Activated CD4-positive, alpha-beta T cell treated with anti-CD3 and anti-CD28 coated beads, Interleukin-2, amount 10 ng/mL, durations not matched to agents 24 days and 14 days (primary cell): ENCODE measurements at regions of chr20 and their contacts with region 1.

Region 1: GRCh38 chr20:50731055-50731871 is at the start of gene PARD6B:
- DNase-seq: peak; percentile 100
- H3K4me3 Mint-ChIP-seq: peak within 1 kb of the TSS; percentile 86
- H3K27ac Mint-ChIP-seq: peak within 1 kb of the TSS; percentile 91
- H3K4me1 Mint-ChIP-seq: peaks cover 30% of the 10 kb centered on the region
- H3K27me3 Mint-ChIP-seq: no peaks in the 10 kb centered on the region
- total RNA-seq, gene PARD6B: 6.0 and 7.0 TPM in 2 replicates

Region 2: DNA sequence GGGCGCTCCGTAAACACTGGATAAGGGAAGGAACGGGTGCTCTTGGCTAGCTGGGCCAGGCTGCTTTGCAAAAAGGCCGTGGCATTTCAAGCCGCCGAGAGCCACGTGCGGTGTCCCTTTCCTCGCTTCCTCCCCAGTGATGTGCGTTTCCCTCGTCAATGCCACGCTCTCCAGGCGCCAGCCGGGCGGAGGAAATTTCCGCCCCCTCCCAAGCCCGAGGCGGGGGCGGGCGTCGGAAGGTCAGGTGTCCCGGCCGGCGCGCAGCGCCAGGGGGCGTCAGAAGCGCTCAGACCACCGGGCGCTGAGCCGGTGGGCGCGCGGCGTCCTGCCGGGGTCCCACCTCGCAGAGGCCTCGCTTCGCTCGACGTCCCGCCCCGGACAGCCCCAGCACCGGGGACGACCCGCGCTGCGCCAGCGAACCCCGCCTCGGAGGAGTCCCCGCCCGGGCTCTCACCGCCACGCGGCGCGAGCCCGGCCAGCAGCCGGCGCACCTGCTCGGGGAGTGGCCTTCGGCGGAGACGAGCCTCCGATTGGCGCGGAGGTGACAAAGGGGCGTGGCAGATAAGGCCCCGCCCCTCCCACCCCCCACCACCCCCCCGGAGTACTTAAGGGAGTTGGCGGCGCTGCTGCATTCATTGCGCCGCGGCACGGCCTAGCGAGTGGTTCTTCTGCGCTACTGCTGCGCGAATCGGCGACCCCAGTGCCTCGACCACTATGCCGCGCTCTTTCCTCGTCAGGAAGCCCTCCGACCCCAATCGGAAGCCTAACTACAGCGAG is 748.7 kb before region 1 on chr20 and contains the start of gene SNAI1:
- intact Hi-C with region 1: loop called (anchors 5 kb)
- DNase-seq: peak; percentile 95
- H3K4me3 Mint-ChIP-seq: peak within 1 kb of the TSS; percentile 79
- H3K27ac Mint-ChIP-seq: peak within 1 kb of the TSS; percentile 78
- H3K4me1 Mint-ChIP-seq: peaks cover 13% of the 10 kb centered on the region
- H3K27me3 Mint-ChIP-seq: peaks cover 30% of the 10 kb centered on the region
- total RNA-seq, gene SNAI1: 1.6 and 2.3 TPM in 2 replicates

Region 3: GRCh38 chr20:50189681-50190582 is 541.3 kb before region 1 on chr20:
- intact Hi-C with region 1: loop called (anchors 2 kb)
- DNase-seq: peak; percentile 96
- H3K4me3 Mint-ChIP-seq: peak overlapping the region; percentile 55
- H3K27ac Mint-ChIP-seq: peak overlapping the region; percentile 41
- H3K4me1 Mint-ChIP-seq: peaks cover 30% of the 10 kb centered on the region
- H3K27me3 Mint-ChIP-seq: peaks cover 11% of the 10 kb centered on the region

Region 4: GRCh38 chr20:50746138-50746940 is 15.1 kb after region 1 on chr20:
- intact Hi-C with region 1: loop called (anchors 2 kb)
- DNase-seq: no peak
- H3K4me3 Mint-ChIP-seq: no peak overlapping the region
- H3K27ac Mint-ChIP-seq: peak overlapping the region; percentile 83
- H3K4me1 Mint-ChIP-seq: peaks cover 21% of the 10 kb centered on the region
- H3K27me3 Mint-ChIP-seq: no peaks in the 10 kb centered on the region

Region 5: DNA sequence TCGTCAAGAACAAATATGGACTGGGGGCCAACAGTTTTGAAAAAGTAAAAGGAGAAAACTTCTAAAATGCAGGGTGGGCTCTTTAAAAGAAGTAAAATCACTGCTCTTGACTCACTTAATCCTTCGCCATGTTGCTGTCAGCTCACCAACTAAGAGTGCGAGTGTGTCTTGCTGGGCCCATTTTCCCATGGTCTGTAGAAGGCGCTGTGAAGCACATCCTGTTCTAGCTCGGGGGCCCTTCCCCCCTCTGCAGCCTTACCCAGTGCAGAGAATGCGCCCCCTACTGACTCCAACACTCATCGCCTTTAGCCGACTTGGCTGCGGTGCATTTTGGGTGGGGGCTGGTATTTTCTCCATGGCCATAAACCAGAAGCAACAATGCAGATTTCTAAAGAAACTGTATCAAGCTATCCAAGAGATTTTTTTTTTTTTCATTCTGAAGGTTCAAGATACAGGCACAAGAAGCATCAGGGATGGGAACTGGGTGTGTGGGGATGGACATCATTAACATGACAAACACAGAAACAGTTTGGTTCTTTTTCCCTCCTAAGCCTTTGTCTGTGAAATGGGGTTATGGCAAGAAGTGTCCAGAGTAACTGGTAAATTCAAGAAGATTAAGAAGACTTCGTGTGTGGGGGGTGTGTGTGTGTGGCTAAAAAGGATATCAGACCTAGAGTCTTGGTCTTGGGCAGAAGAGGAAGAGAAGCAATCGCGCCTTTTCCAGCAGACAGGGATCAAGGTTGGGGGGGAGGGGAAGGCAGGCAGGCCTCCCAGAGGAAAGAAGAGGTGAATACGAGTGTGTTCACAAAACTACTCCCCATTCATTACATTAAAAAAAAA is 198.3 kb after region 1 on chr20:
- intact Hi-C with region 1: loop called (anchors 2 kb)
- DNase-seq: peak; percentile 97
- H3K4me3 Mint-ChIP-seq: peak overlapping the region; percentile 94
- H3K27ac Mint-ChIP-seq: peak overlapping the region; percentile 98
- H3K4me1 Mint-ChIP-seq: peaks cover 46% of the 10 kb centered on the region
- H3K27me3 Mint-ChIP-seq: no peaks in the 10 kb centered on the region

Region 6: DNA sequence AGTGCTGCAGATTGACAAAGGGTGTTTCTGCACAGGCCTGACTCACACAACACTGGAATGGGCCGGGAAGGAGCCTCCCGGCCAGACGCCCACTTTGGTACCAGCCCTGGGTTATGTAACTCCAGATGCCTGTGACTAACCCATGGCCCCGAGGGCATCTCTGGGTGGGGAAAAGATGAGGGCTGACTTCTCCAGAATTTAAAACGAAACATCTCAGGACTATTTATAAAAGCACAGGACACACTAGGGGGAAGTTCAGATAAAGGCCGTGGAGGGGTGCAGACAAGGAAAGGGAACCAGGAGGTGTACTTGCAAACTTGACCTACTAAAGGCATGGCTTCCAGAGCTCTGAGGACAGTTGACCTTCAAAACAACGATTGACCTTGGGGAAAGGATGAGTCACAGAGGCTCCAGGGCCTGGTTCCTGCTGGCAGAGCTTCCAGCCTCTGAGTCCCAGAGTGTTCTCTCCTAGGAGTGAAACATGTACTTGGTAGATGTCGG is 614.4 kb after region 1 on chr20:
- intact Hi-C with region 1: no loop called
- DNase-seq: no peak
- H3K4me3 Mint-ChIP-seq: no peak overlapping the region
- H3K27ac Mint-ChIP-seq: no peak overlapping the region
- H3K4me1 Mint-ChIP-seq: no peaks in the 10 kb centered on the region
- H3K27me3 Mint-ChIP-seq: peaks cover 8% of the 10 kb centered on the region